Activated B cell treated with CpG ODN at 0.5 μM for 24 hours (primary cell): ENCODE measurements at regions of chr12 and their contacts with region 1.

Region 1: DNA sequence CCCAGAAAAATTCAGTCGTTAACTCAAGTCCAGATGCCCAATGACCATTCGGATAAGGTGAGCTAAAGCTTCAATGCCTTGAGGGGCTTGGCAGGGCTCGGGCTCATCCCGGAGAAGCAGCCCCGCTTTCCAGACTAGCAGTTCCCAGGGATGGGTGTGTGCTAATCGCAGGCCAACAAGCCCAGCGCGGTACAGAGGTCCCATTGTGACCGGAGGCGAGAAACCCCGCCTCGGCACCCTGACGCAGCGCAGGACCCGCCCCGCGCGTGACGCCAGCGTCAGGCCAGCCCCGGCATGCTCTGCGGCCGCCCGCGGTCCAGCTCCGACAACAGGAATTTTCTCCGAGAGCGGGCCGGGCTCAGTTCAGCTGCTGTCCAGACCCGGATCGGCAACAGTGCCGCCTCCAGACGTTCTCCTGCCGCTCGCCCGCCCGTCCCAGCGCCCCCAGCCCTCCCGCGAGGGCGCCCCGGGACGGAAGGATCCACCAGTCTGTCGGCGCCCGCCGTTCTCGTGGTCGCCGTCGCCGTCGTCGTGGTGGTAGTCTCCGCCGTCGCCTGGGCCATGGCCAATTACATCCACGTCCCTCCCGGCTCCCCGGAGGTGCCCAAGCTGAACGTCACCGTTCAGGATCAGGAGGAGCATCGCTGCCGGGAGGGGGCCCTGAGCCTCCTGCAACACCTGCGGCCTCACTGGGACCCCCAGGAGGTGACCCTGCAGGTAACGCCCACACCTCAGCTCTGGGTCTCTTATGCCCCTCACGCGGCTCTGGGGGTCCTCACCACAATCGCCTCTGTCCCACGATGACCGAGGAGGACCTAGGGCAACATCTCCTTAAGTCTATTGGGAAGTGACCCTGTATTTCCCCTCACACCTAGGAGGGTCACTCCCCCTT is at the start of gene ETNK1:
- DNase-seq: peak; percentile 91
- ATAC-seq: peak; percentile 98
- H3K4me3 Mint-ChIP-seq: peak within 1 kb of the TSS; percentile 93
- H3K27ac Mint-ChIP-seq: peak within 1 kb of the TSS; percentile 89
- H3K4me1 Mint-ChIP-seq: peaks cover 43% of the 10 kb centered on the region
- H3K27me3 Mint-ChIP-seq: peaks cover 8% of the 10 kb centered on the region
- CTCF ChIP-seq: no peak
- total RNA-seq, gene ETNK1: 80.9 and 98.5 TPM in 2 replicates

Region 2: GRCh38 chr12:21438643-21439042 is 1186.5 kb before region 1 on chr12:
- CTCF ChIA-PET with region 1: no interaction called
- POLR2A ChIA-PET with region 1: no interaction called
- intact Hi-C with region 1: loop called (anchors 5 kb)
- DNase-seq: no peak
- ATAC-seq: no peak
- H3K4me3 Mint-ChIP-seq: peak overlapping the region; percentile 99
- H3K27ac Mint-ChIP-seq: peak overlapping the region; percentile 97
- H3K4me1 Mint-ChIP-seq: peaks cover 27% of the 10 kb centered on the region
- H3K27me3 Mint-ChIP-seq: peaks cover 2% of the 10 kb centered on the region
- CTCF ChIP-seq: no peak

Region 3: DNA sequence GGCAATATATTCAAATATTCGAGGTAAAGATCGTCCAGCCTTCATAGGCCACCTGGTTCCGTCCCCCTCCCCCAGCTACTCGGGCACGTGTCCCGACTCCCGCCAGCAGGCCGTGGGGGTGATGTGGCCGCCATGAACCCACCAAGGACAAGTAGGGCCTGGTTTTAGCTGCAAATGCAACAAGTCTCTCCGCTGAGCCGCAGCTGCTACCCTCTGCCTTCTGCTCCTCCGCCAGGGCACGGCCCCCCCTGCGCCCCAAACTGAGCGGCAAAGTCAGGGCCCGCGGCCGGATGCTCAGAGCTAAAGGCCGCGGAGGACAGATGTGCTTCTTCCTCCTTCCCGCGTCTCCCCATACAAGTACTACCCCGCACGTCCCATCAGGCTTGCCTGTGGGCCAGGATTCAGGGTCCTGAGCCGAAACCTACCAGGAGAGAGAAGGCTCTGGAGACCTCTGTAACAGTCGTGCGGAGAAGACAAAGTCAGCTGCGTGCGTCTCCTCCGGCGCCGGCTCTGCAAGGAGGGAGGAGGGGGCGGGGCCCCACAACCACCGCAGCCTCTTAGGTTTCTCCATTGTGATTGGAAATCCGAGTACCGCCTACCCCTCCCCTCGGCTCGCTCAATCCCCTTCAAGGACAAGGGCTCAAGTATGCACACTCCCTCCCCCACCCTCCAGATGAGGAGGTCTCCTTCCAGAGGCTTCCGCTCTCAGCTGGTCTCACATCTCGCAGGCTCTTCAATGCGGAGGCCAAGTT is 967.6 kb before region 1 on chr12 and contains the start of gene LDHB:
- CTCF ChIA-PET with region 1: no interaction called
- POLR2A ChIA-PET with region 1: no interaction called
- intact Hi-C with region 1: loop called (anchors 10 kb)
- DNase-seq: peak; percentile 72
- ATAC-seq: peak; percentile 97
- H3K4me3 Mint-ChIP-seq: peak within 1 kb of the TSS; percentile 99
- H3K27ac Mint-ChIP-seq: peak within 1 kb of the TSS; percentile 97
- H3K4me1 Mint-ChIP-seq: peaks cover 24% of the 10 kb centered on the region
- H3K27me3 Mint-ChIP-seq: peaks cover 3% of the 10 kb centered on the region
- CTCF ChIP-seq: no peak
- total RNA-seq, gene LDHB: 385 and 440 TPM in 2 replicates

Region 4: GRCh38 chr12:22164139-22164538 is 461.0 kb before region 1 on chr12:
- CTCF ChIA-PET with region 1: no interaction called
- POLR2A ChIA-PET with region 1: no interaction called
- intact Hi-C with region 1: loop called (anchors 5 kb)
- DNase-seq: no peak
- ATAC-seq: peak; percentile 90
- H3K4me3 Mint-ChIP-seq: peak overlapping the region; percentile 25
- H3K27ac Mint-ChIP-seq: peak overlapping the region; percentile 41
- H3K4me1 Mint-ChIP-seq: peaks cover 33% of the 10 kb centered on the region
- H3K27me3 Mint-ChIP-seq: no peaks in the 10 kb centered on the region
- CTCF ChIP-seq: no peak

Region 5: GRCh38 chr12:22473212-22473611 is 151.9 kb before region 1 on chr12:
- CTCF ChIA-PET with region 1: no interaction called
- POLR2A ChIA-PET with region 1: no interaction called
- intact Hi-C with region 1: loop called (anchors 5 kb)
- DNase-seq: no peak
- ATAC-seq: peak; percentile 62
- H3K4me3 Mint-ChIP-seq: no peak overlapping the region
- H3K27ac Mint-ChIP-seq: peak overlapping the region; percentile 3
- H3K4me1 Mint-ChIP-seq: peaks cover 10% of the 10 kb centered on the region
- H3K27me3 Mint-ChIP-seq: no peaks in the 10 kb centered on the region
- CTCF ChIP-seq: no peak

Region 6: DNA sequence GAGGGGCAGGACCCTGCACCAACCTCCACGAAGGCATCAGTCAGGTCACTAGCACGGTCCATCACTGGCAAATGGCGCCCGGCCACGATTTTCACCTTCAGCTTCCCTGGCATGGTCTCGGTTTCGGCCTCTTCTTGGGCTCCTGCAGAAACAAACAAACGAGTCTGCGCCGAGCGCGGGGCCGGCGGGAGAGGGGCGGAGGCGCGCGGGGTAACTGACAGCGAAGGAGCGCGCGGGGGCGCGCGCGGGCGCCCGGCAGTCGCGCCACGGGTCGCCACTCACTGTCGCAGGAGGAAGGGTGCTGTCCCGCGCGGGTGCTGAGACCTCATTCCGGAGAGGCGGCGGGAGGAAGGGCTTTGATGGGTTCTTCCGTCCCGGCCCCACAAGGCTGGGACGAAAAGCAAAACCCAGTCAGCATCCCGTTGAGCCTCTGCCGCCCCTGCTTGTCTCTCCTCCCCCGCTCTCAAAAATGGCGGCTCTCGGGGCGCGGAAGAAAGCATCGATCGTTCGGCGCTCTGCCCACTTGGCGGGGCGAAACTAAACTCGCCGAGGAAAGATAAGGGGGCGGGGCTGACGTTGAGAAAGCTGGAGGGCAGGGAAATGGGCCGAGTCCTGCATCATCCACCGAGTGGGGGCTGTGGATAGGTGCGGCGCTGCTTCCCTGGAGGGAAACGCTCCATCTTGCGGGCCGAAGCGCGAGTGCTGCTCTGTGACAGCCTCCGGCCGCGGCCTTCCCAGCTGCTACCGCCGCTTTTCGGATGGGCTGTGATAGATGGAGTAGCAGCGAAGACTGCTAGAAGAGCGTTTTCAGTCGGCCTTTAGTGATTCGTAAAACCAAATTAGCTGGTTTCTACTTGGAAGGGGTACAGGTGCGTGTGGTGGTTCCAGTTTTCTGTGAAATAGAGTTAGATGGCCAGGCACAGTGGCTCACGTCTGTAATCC is 80.8 kb before region 1 on chr12 and contains the start of gene C2CD5:
- CTCF ChIA-PET with region 1: interaction called, 3 read pairs
- POLR2A ChIA-PET with region 1: interaction called, 40 read pairs
- intact Hi-C with region 1: loop called (anchors 1 kb)
- DNase-seq: peak; percentile 86
- ATAC-seq: peak; percentile 89
- H3K4me3 Mint-ChIP-seq: peak within 1 kb of the TSS; percentile 92
- H3K27ac Mint-ChIP-seq: peak within 1 kb of the TSS; percentile 96
- H3K4me1 Mint-ChIP-seq: peaks cover 42% of the 10 kb centered on the region
- H3K27me3 Mint-ChIP-seq: no peaks in the 10 kb centered on the region
- CTCF ChIP-seq: no peak
- total RNA-seq, gene C2CD5: 30.7 and 38.4 TPM in 2 replicates